MCF 10A (cell line): ENCODE measurements at regions of chr17 and their contacts with region 1.

Region 1: GRCh38 chr17:50487213-50488096 is 8.8 kb downstream of the RSAD1 start:
- DNase-seq: peak; percentile 90
- H3K4me3 Mint-ChIP-seq: no peak overlapping the region
- H3K27ac Mint-ChIP-seq: peak overlapping the region; percentile 55
- H3K4me1 Mint-ChIP-seq: peaks cover 27% of the 10 kb centered on the region
- H3K27me3 Mint-ChIP-seq: no peaks in the 10 kb centered on the region
- CTCF ChIP-seq: no peak

Region 2: GRCh38 chr17:50431233-50431632 is 56.2 kb before region 1 on chr17:
- CTCF ChIA-PET with region 1: interaction called, 4 read pairs
- POLR2A ChIA-PET with region 1: interaction called, 10 read pairs
- intact Hi-C with region 1: no loop called
- DNase-seq: no peak
- H3K4me3 Mint-ChIP-seq: no peak overlapping the region
- H3K27ac Mint-ChIP-seq: no peak overlapping the region
- H3K4me1 Mint-ChIP-seq: peaks cover 15% of the 10 kb centered on the region
- H3K27me3 Mint-ChIP-seq: no peaks in the 10 kb centered on the region
- CTCF ChIP-seq: no peak

Region 3: DNA sequence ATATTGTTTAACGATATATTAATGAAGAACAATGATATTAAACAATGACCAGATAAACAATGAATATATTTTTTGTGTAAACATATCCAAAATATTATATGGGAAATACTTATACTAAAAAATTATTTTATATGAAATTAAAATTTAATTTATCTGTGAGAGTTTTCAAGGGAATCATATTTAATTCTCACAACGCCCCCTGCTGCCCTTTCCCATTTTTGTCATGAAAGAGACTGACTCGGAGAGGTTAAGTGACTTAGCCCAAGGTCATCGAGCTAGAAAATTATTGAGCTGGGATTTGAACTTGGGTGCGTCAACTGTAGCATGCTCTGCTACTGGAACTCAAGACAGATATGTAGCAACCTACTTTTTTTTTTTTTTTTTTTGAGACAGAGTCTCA is 13.6 kb after region 1 on chr17:
- CTCF ChIA-PET with region 1: interaction called, 68 read pairs
- POLR2A ChIA-PET with region 1: interaction called, 21 read pairs
- intact Hi-C with region 1: loop called (anchors 1 kb)
- DNase-seq: peak; percentile 59
- H3K4me3 Mint-ChIP-seq: no peak overlapping the region
- H3K27ac Mint-ChIP-seq: no peak overlapping the region
- H3K4me1 Mint-ChIP-seq: peaks cover 11% of the 10 kb centered on the region
- H3K27me3 Mint-ChIP-seq: no peaks in the 10 kb centered on the region
- CTCF ChIP-seq: peak; percentile 31

Region 4: GRCh38 chr17:50507871-50508572 is 20.6 kb after region 1 on chr17 and contains the start of gene MYCBPAP:
- CTCF ChIA-PET with region 1: interaction called, 68 read pairs
- POLR2A ChIA-PET with region 1: interaction called, 21 read pairs
- intact Hi-C with region 1: no loop called
- DNase-seq: no peak
- H3K4me3 Mint-ChIP-seq: peak within 1 kb of the TSS; percentile 28
- H3K27ac Mint-ChIP-seq: no peak within 1 kb of the TSS
- H3K4me1 Mint-ChIP-seq: peaks cover 24% of the 10 kb centered on the region
- H3K27me3 Mint-ChIP-seq: no peaks in the 10 kb centered on the region
- CTCF ChIP-seq: no peak
- total RNA-seq, gene MYCBPAP: 0.19 TPM in 1 of 2 replicates, not detected in the other

Region 5: DNA sequence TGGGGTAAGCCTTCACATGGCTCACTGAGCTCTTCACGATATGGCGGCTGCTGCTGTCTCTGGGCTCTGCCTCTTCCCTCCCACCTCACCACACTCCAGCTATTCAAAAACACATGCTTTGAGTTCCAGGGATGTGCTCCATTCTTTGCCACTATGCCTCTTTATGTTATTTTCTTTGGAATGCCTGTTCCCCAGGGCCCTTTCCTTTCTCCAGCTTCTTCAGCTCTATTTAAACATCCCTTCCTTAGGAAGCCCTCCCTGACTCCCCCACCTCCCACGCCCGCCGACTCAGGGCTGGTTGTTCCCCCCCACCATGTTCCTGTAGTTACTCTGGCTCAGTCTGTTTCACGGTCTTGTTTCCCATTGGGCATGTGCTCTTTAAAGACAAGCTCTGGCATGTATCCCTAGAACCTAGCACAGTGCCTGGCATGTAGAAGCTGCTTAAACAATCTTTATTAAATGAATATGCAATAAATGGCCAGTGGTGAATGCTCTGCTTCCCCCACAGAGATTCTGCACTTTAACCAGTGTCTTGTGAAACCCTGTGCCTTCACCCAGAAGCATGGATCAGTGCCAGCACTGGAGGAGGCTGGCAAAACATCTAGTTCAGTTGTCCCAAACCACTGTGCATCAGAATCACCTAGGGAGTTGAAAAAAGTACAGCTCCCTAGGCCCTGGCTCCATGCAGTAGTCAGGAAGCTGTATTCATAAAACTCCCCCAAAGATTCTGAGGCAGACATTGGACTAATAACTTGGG is 27.7 kb after region 1 on chr17:
- CTCF ChIA-PET with region 1: interaction called, 4 read pairs
- POLR2A ChIA-PET with region 1: interaction called, 24 read pairs
- intact Hi-C with region 1: no loop called
- DNase-seq: peak; percentile 85
- H3K4me3 Mint-ChIP-seq: no peak overlapping the region
- H3K27ac Mint-ChIP-seq: peak overlapping the region; percentile 11
- H3K4me1 Mint-ChIP-seq: peaks cover 45% of the 10 kb centered on the region
- H3K27me3 Mint-ChIP-seq: no peaks in the 10 kb centered on the region
- CTCF ChIP-seq: no peak

Region 6: GRCh38 chr17:50523208-50523607 is 35.8 kb after region 1 on chr17:
- CTCF ChIA-PET with region 1: interaction called, 4 read pairs
- POLR2A ChIA-PET with region 1: interaction called, 24 read pairs
- intact Hi-C with region 1: no loop called
- DNase-seq: peak; percentile 85
- H3K4me3 Mint-ChIP-seq: no peak overlapping the region
- H3K27ac Mint-ChIP-seq: no peak overlapping the region
- H3K4me1 Mint-ChIP-seq: peaks cover 21% of the 10 kb centered on the region
- H3K27me3 Mint-ChIP-seq: no peaks in the 10 kb centered on the region
- CTCF ChIP-seq: no peak

Region 7: DNA sequence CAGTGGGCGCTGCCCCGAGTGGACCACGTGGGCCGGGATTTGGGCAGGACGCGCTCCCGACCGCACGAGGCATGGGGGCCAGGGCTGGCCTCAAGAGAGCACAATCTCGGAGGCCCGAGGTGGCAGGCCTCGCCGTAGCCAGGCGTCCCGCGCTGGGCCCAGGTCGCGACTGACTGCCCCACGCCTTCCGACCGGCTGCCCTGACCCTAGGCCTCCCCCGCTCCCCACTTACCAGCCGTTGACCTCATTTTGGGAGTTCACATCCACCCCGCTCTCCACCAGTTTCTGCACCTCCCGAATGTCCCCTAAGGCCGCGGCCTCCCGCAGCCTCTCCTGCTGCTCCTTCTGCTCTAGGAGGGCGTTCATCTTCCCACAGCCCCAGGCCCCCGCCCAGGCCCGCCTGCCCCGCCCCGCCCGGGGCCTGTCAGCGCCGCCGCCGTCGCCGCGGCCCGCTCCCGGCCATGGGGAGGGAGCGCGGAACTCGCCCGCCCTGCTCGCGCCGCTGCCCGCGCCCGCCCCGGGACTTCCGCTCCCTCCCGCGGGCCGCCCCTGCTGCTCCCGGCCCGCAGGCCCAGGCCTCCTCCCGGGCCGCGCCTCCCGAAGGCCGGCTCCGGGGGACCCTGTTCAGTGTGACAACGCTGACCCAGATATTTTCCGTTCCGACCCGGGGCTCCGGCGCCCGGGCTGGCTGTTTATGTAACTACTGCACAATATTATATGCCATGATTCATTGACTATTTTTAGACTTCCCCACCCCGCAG is 220.0 kb after region 1 on chr17 and contains the start of gene ANKRD40:
- CTCF ChIA-PET with region 1: interaction called, 3 read pairs
- POLR2A ChIA-PET with region 1: interaction called, 20 read pairs
- intact Hi-C with region 1: no loop called
- DNase-seq: peak; percentile 94
- H3K4me3 Mint-ChIP-seq: peak within 1 kb of the TSS; percentile 95
- H3K27ac Mint-ChIP-seq: peak within 1 kb of the TSS; percentile 76
- H3K4me1 Mint-ChIP-seq: peaks cover 25% of the 10 kb centered on the region
- H3K27me3 Mint-ChIP-seq: no peaks in the 10 kb centered on the region
- CTCF ChIP-seq: no peak
- total RNA-seq, gene ANKRD40: 42.2 and 46.4 TPM in 2 replicates